ENCODE measurements at regions of chr2 and their contacts with region 1.

Region 1: DNA sequence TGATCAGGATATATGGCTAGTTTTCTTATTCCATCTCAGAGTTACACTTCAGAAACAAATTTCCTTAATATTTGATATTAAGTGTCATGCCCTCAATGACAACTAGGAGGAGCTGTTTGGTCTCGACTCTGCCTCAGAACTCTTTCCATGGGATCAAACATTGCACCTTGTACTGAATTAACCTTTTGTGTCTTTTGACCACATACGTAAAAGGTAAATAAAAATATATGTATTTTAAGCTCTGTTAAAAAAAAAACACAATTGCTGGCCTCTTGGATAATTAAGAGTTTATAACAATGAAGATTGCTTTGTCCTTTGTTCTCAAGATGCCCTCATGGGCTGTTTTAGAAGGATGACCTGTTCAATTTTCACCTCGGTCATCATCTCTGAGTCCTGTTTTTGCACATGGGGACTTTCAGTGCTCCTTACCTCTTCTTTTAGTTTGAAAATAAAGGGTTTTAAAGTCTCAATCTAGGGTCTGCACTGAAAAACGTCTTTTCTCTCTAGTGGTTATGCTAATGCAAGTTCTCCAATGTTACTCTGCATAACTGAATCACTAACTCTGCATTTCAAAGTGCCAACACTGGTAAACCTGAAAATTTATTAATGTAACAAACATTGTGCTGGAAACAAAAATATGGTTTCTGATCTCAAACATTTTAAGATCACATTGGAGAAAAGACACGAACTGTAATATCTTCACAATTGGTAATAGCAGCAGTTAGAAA is 18.8 kb upstream of the FN1 start:
- DNase-seq: peak; percentile 21
- H3K4me3 Mint-ChIP-seq: no peak overlapping the region
- H3K27ac Mint-ChIP-seq: no peak overlapping the region
- H3K4me1 Mint-ChIP-seq: no peaks in the 10 kb centered on the region
- H3K27me3 Mint-ChIP-seq: no peaks in the 10 kb centered on the region
- CTCF ChIP-seq: peak; percentile 63

Region 2: GRCh38 chr2:215680605-215681598 is 226.2 kb after region 1 on chr2:
- CTCF ChIA-PET with region 1: no interaction called
- intact Hi-C with region 1: loop called (anchors 5 kb)
- DNase-seq: peak; percentile 73
- H3K4me3 Mint-ChIP-seq: peak overlapping the region; percentile 28
- H3K27ac Mint-ChIP-seq: peak overlapping the region; percentile 94
- H3K4me1 Mint-ChIP-seq: peaks cover 61% of the 10 kb centered on the region
- H3K27me3 Mint-ChIP-seq: no peaks in the 10 kb centered on the region
- CTCF ChIP-seq: no peak

Region 3: GRCh38 chr2:215920244-215921100 is 465.8 kb after region 1 on chr2:
- CTCF ChIA-PET with region 1: no interaction called
- intact Hi-C with region 1: loop called (anchors 1 kb)
- DNase-seq: peak; percentile 76
- H3K4me3 Mint-ChIP-seq: no peak overlapping the region
- H3K27ac Mint-ChIP-seq: no peak overlapping the region
- H3K4me1 Mint-ChIP-seq: peaks cover 28% of the 10 kb centered on the region
- H3K27me3 Mint-ChIP-seq: no peaks in the 10 kb centered on the region
- CTCF ChIP-seq: peak; percentile 92

Measured in Calu3 (cell line).